Endothelial cell of umbilical vein (primary cell): ENCODE measurements at regions of chr3 and their contacts with region 1.

Region 1: DNA sequence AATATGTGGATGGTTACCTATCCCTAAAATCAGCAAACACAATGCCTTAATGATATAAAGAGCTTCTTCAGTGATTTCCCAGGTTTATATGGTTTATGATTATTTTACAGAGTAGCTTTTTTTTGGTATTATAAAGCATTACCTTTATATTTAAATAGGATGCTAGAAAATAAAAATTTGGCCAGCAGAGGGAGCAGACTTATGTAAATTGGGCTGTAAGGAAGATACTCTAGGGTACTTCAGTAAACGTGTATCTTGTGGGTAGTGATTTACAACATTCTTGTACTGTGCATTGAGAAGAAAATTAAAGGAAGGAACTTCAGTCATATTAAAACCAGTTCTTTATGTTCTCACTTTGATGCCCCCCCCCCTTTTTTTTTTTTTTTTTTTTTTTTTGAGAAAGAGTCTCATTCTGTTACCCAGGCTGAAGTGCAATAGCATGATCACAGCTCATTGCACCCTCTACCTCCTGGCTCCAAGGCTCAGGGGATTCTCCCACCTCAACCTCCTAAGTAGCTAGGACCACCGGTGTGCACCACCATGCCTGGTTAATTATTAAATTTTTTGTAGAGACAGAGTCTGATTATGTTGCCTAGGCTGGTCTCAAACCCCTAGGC is 167.9 kb downstream of the BBX start:
- DNase-seq: peak; percentile 51
- H3K4me3 ChIP-seq: no peak overlapping the region
- H3K27ac ChIP-seq: no peak overlapping the region
- H3K4me1 ChIP-seq: no peaks in the 10 kb centered on the region
- H3K27me3 ChIP-seq: no peaks in the 10 kb centered on the region
- CTCF ChIP-seq: peak; percentile 25 to 27
- POLR2A ChIP-seq: no peak

Region 2: GRCh38 chr3:107704477-107704876 is 13.8 kb after region 1 on chr3:
- CTCF ChIA-PET with region 1: interaction called, 25 read pairs
- POLR2A ChIA-PET with region 1: no interaction called
- dilution Hi-C with region 1: no loop called
- intact Hi-C with region 1: no loop called
- DNase-seq: no peak
- H3K4me3 ChIP-seq: no peak overlapping the region
- H3K27ac ChIP-seq: no peak overlapping the region
- H3K4me1 ChIP-seq: no peaks in the 10 kb centered on the region
- H3K27me3 ChIP-seq: no peaks in the 10 kb centered on the region
- CTCF ChIP-seq: no peak
- POLR2A ChIP-seq: no peak

Region 3: GRCh38 chr3:107718547-107718946 is 27.9 kb after region 1 on chr3:
- CTCF ChIA-PET with region 1: interaction called, 17 read pairs
- POLR2A ChIA-PET with region 1: no interaction called
- dilution Hi-C with region 1: no loop called
- intact Hi-C with region 1: no loop called
- DNase-seq: no peak
- H3K4me3 ChIP-seq: no peak overlapping the region
- H3K27ac ChIP-seq: no peak overlapping the region
- H3K4me1 ChIP-seq: peaks cover 14% of the 10 kb centered on the region
- H3K27me3 ChIP-seq: no peaks in the 10 kb centered on the region
- CTCF ChIP-seq: no peak
- POLR2A ChIP-seq: no peak

Region 4: DNA sequence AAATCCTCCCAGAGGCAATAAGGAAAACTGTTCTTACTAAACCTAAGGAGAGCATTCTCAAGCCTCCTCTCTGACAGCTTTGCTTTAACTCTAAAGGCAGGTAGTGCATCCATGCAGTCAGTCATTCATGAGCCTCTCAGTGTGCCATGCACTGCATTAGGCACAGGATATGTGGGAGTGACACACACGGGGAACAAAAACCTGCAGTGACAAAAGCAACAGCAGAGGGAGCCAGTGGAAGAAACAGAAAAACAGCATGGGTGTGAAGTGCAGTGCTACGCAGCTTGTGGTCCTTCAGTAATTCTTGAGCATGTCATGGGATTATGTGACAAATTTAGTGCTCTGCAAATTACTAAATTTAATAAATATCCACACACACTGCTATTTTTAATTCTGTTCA is 62.9 kb after region 1 on chr3:
- CTCF ChIA-PET with region 1: interaction called, 44 read pairs
- POLR2A ChIA-PET with region 1: no interaction called
- dilution Hi-C with region 1: no loop called
- intact Hi-C with region 1: no loop called
- DNase-seq: peak; percentile 47
- H3K4me3 ChIP-seq: no peak overlapping the region
- H3K27ac ChIP-seq: no peak overlapping the region
- H3K4me1 ChIP-seq: no peaks in the 10 kb centered on the region
- H3K27me3 ChIP-seq: no peaks in the 10 kb centered on the region
- CTCF ChIP-seq: peak; percentile 29 to 52
- POLR2A ChIP-seq: no peak